ENCODE measurements at regions of chr6 and their contacts with region 1.

Region 1: GRCh38 chr6:149028767-149029405 is 282.1 kb downstream of the UST start:
- DNase-seq: peak; percentile 80
- H3K4me3 ChIP-seq: no peak overlapping the region
- H3K27ac ChIP-seq: no peak overlapping the region
- H3K4me1 ChIP-seq: no peaks in the 10 kb centered on the region
- H3K27me3 ChIP-seq: no peaks in the 10 kb centered on the region
- CTCF ChIP-seq: peak; percentile 69 to 89 (median 84)
- POLR2A ChIP-seq: no peak

Region 2: GRCh38 chr6:148578245-148578732 is 450.6 kb before region 1 on chr6:
- intact Hi-C with region 1: loop called (anchors 5 kb)
- DNase-seq: peak; percentile 66
- H3K4me3 ChIP-seq: no peak overlapping the region
- H3K27ac ChIP-seq: no peak overlapping the region
- H3K4me1 ChIP-seq: no peaks in the 10 kb centered on the region
- H3K27me3 ChIP-seq: no peaks in the 10 kb centered on the region
- CTCF ChIP-seq: peak; percentile 46 to 75 (median 66)
- POLR2A ChIP-seq: no peak

Region 3: DNA sequence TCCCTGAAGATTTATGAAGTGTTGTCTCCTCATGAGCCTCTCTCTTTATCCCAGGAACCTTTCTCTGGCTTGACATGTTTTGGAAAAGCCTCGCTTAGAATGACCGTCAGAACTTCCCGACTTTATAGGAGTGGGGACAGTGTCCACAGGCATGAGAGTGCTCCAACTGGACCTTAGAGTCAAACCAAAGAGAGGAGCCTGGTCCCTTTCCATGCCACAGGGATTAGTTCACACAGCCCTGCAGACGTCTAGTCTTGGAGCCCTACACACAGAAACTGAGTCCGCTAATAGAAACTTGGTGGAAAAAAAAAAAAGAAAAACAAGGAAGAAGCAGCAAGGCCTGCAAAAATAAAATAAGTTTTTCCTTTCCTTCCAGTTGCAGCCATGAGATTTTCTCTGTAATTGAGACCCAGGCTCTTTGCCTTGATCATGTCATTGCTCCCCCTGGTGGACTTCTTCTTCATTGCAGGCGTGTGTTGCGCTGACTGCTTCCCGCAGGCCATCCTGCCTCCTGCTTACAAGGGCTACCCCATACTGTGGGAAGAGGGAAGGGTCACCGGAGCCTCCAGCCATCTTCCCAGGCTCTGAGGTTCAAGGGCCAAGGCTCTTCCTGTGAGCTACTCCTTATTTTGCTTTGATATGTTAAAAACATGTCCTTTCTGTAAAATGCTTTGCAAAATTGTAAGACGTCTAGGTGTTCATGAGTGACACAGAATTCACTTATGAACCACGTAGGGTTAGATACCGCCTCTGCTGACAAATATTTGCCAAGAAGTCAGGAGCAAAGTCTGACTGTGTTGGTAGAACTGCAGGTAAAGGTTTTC is 81.1 kb before region 1 on chr6:
- intact Hi-C with region 1: loop called (anchors 5 kb)
- DNase-seq: peak; percentile 84
- H3K4me3 ChIP-seq: no peak overlapping the region
- H3K27ac ChIP-seq: no peak overlapping the region
- H3K4me1 ChIP-seq: no peaks in the 10 kb centered on the region
- H3K27me3 ChIP-seq: no peaks in the 10 kb centered on the region
- CTCF ChIP-seq: peak; percentile 67 to 87 (median 84)
- POLR2A ChIP-seq: no peak

Region 4: GRCh38 chr6:149431905-149432775 is 403.3 kb after region 1 on chr6:
- intact Hi-C with region 1: loop called (anchors 2 kb)
- DNase-seq: peak; percentile 87
- H3K4me3 ChIP-seq: no peak overlapping the region
- H3K27ac ChIP-seq: no peak overlapping the region
- H3K4me1 ChIP-seq: no peaks in the 10 kb centered on the region
- H3K27me3 ChIP-seq: no peaks in the 10 kb centered on the region
- CTCF ChIP-seq: peak; percentile 89 to 95 (median 94)
- POLR2A ChIP-seq: no peak

Region 5: GRCh38 chr6:149513915-149514314 is 485.0 kb after region 1 on chr6:
- intact Hi-C with region 1: loop called (anchors 5 kb)
- DNase-seq: no peak
- H3K4me3 ChIP-seq: no peak overlapping the region
- H3K27ac ChIP-seq: no peak overlapping the region
- H3K4me1 ChIP-seq: no peaks in the 10 kb centered on the region
- H3K27me3 ChIP-seq: no peaks in the 10 kb centered on the region
- CTCF ChIP-seq: no peak
- POLR2A ChIP-seq: no peak